Activated CD8-positive, alpha-beta T cell treated with anti-CD3 and anti-CD28 coated beads for 36 hours (primary cell): ENCODE measurements at regions of chr1 and their contacts with region 1.

Region 1: GRCh38 chr1:206725109-206725963 is 40.6 kb downstream of the MAPKAPK2 start:
- DNase-seq: peak; percentile 83
- ATAC-seq: peak; percentile 57
- H3K4me3 Mint-ChIP-seq: no peak overlapping the region
- H3K27ac Mint-ChIP-seq: no peak overlapping the region
- H3K4me1 Mint-ChIP-seq: peaks cover 57% of the 10 kb centered on the region
- H3K27me3 Mint-ChIP-seq: no peaks in the 10 kb centered on the region
- CTCF ChIP-seq: peak; percentile 6

Region 2: GRCh38 chr1:206706298-206706791 is 19.0 kb before region 1 on chr1:
- CTCF ChIA-PET with region 1: interaction called, 109 read pairs
- POLR2A ChIA-PET with region 1: interaction called, 3 read pairs
- intact Hi-C with region 1: no loop called
- DNase-seq: peak; percentile 84
- ATAC-seq: peak; percentile 49
- H3K4me3 Mint-ChIP-seq: no peak overlapping the region
- H3K27ac Mint-ChIP-seq: peak overlapping the region; percentile 28
- H3K4me1 Mint-ChIP-seq: peaks cover 83% of the 10 kb centered on the region
- H3K27me3 Mint-ChIP-seq: no peaks in the 10 kb centered on the region
- CTCF ChIP-seq: no peak

Region 3: DNA sequence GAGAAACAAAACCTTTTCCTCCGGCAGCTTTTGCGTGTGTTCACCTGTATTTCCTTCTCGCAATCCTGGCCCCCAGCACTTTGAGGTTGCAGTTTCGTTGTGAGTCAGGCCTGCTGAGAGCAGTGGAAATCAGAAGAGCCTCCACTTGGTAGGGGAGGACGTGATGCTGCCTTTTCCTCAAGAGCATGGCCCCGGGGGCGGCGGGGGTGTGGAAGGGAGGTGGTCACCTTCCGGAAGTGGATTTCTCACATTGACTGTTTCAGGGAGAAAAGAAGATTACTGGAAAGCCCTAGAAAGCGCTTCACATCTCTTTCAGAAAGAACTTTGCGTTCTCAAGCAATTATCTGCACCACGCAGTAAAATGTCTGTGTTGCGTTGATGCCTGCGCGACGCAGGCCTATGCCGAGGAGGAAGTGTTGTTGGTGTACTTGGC is 59.2 kb after region 1 on chr1:
- CTCF ChIA-PET with region 1: interaction called, 16 read pairs
- POLR2A ChIA-PET with region 1: interaction called, 3 read pairs
- intact Hi-C with region 1: no loop called
- DNase-seq: peak; percentile 97
- ATAC-seq: peak; percentile 75
- H3K4me3 Mint-ChIP-seq: peak overlapping the region; percentile 11
- H3K27ac Mint-ChIP-seq: peak overlapping the region; percentile 78
- H3K4me1 Mint-ChIP-seq: peaks cover 65% of the 10 kb centered on the region
- H3K27me3 Mint-ChIP-seq: no peaks in the 10 kb centered on the region
- CTCF ChIP-seq: no peak

Region 4: GRCh38 chr1:206821493-206821892 is 96.2 kb after region 1 on chr1:
- CTCF ChIA-PET with region 1: interaction called, 14 read pairs
- POLR2A ChIA-PET with region 1: interaction called, 4 read pairs
- intact Hi-C with region 1: no loop called
- DNase-seq: no peak
- ATAC-seq: no peak
- H3K4me3 Mint-ChIP-seq: no peak overlapping the region
- H3K27ac Mint-ChIP-seq: no peak overlapping the region
- H3K4me1 Mint-ChIP-seq: peaks cover 20% of the 10 kb centered on the region
- H3K27me3 Mint-ChIP-seq: no peaks in the 10 kb centered on the region
- CTCF ChIP-seq: no peak

Region 5: DNA sequence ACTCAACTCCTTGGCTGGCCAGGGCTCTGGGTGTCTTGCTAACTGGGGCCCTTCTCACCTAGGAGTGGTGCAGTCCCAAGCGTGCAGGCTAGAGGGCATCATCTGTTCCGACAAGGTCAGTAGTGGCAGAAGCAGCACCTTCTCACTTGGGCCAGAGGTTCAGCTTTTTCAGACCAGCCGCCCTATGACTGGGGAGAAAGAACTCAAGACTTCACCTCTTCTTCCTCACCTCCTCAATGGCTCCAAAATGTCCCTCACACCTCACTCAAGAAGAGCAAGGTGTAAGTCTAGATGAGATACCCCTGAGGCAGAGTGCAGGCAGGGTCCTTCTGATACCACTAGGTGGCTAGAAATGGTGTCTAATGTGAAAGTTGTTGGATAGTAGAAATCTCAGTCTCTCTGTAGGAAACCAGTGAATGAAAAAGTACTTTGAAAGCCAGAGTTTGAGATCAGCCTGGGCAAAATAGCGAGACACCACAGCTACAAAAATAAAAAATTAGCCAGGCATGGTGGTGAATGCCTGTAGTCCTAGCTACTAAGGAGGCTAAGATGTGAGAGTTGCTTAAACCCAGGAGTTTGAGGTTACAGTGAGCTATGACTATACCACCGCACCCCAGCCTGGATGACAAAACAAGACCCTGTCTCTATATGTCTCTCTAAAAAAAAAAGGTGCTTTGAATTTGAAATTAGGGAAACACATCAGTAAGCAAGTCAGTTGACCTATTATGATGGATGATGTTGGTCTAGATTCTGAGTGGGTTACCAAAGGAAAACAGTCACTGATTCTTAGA is 131.5 kb after region 1 on chr1:
- CTCF ChIA-PET with region 1: interaction called, 18 read pairs
- POLR2A ChIA-PET with region 1: no interaction called
- intact Hi-C with region 1: no loop called
- DNase-seq: peak; percentile 30
- ATAC-seq: peak; percentile 72
- H3K4me3 Mint-ChIP-seq: no peak overlapping the region
- H3K27ac Mint-ChIP-seq: no peak overlapping the region
- H3K4me1 Mint-ChIP-seq: peaks cover 11% of the 10 kb centered on the region
- H3K27me3 Mint-ChIP-seq: no peaks in the 10 kb centered on the region
- CTCF ChIP-seq: peak; percentile 58

Region 6: GRCh38 chr1:206918076-206918475 is 192.7 kb after region 1 on chr1:
- CTCF ChIA-PET with region 1: interaction called, 87 read pairs
- POLR2A ChIA-PET with region 1: no interaction called
- intact Hi-C with region 1: no loop called
- DNase-seq: no peak
- ATAC-seq: no peak
- H3K4me3 Mint-ChIP-seq: peak overlapping the region; percentile 75
- H3K27ac Mint-ChIP-seq: peak overlapping the region; percentile 89
- H3K4me1 Mint-ChIP-seq: peaks cover 64% of the 10 kb centered on the region
- H3K27me3 Mint-ChIP-seq: no peaks in the 10 kb centered on the region
- CTCF ChIP-seq: no peak